Endothelial cell of umbilical vein (primary cell): ENCODE measurements at regions of chr1 and their contacts with region 1.

Region 1: GRCh38 chr1:242454262-242455045 is 70.0 kb downstream of the PLD5 start:
- DNase-seq: peak; percentile 37
- H3K4me3 ChIP-seq: no peak overlapping the region
- H3K27ac ChIP-seq: no peak overlapping the region
- H3K4me1 ChIP-seq: no peaks in the 10 kb centered on the region
- H3K27me3 ChIP-seq: no peaks in the 10 kb centered on the region
- CTCF ChIP-seq: peak; percentile 48 to 49
- POLR2A ChIP-seq: no peak

Region 2: GRCh38 chr1:244296447-244296846 is 1842.0 kb after region 1 on chr1:
- CTCF ChIA-PET with region 1: interaction called, 3 read pairs
- POLR2A ChIA-PET with region 1: no interaction called
- dilution Hi-C with region 1: no loop called
- intact Hi-C with region 1: loop called (anchors 10 kb)
- DNase-seq: peak; percentile 54
- H3K4me3 ChIP-seq: no peak overlapping the region
- H3K27ac ChIP-seq: no peak overlapping the region
- H3K4me1 ChIP-seq: peaks cover 22% of the 10 kb centered on the region
- H3K27me3 ChIP-seq: no peaks in the 10 kb centered on the region
- CTCF ChIP-seq: no peak
- POLR2A ChIP-seq: no peak